Left cardiac atrium (tissue), 4 donors: ENCODE measurements at regions of chr6 and their contacts with region 1.

Region 1: GRCh38 chr6:12605888-12606345 is 110.7 kb upstream of the PHACTR1 start:
- DNase-seq: peak; percentile 35
- ATAC-seq: peak in 1 of 2 donors; percentile 69

Region 2: DNA sequence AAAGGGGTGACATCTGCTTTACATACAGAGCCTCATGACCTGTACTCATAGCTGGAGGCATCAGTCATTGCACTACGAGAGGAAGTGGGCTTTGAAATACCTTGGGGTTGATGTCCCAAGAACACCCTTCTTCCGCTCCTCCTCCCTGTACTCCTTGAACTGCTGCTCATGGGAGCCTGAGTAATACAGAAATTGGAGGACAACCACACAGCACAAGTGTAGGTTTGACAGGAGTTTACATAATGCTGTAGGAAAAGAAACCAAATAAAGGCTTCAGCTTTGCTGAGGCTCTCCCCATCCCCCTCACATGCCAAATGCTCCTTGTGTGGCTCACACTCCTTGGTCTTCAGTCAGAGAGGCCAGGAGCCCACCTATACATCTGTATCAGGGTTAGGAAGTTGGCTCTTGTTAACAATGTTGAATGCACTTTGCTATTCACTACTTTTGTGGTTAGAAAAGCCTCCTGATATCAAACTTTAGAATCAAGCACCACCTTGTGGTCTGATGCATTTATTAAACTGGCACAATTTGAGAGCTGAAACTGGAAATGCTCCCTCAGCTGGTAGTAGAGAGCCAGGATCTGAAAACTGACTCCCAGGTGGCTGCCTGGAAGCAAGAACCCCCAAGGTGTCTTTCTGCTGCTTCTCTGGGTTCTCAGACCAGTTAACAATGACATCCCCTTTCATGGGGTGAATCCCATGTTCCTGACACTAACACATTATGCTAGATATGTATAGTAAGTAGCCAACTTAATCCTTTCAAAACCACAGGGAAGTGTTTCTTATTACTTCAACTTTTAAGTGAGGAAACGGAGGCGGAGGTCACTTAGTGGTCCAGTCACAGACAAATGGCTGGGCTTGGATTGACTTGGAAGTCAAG is 372.0 kb before region 1 on chr6:
- intact Hi-C with region 1: no loop called
- DNase-seq: no peak
- ATAC-seq: peak; percentile 65 to 78

Region 3: GRCh38 chr6:12289933-12290820 is 315.7 kb before region 1 on chr6 and contains the start of gene EDN1:
- intact Hi-C with region 1: loop called (anchors 2 to 10 kb)
- DNase-seq: peak; percentile 83
- ATAC-seq: peak; percentile 89 to 92
- total RNA-seq, gene EDN1: 2.7 to 25.4 TPM